Dorsolateral prefrontal cortex (tissue), 120 donors: ENCODE measurements at regions of chr1 and their contacts with region 1.

Region 1: DNA sequence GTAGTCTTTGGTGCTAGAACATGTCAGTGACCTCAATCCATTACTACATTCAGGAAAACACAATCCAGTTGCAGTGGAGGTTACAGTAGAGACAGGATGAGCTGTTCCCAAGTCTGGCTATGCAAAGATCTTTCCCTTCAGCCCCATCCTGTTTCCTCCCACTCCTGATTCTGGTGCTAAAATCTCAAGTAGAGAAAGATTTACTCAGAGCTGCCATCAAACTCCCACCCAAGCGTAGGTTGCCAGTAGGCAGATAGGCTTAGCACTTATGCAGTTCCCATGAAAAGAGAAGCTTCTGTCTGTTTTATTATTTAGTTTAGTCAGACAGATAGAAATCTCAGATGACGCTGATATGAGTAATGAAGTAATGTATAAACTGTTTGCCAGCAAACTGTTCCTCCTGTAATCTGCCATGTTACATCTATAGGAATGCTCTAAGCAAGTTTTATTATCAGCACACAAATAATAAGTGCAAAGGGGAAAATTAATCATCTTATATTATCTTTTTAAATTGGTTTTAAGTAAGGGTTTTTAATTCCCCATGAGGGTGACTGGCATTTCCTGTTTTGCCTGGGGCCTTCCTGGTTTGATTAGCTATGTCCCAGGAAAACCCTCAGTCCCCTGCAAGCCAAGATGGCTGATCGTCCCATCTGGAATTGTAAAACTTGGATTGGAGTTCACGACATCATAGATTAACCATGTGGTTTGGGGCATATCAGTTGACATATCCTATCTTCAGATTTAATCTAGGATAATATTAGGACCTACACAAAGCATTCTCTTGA is 188.3 kb upstream of the PALMD start:
- DNase-seq: peak in 3 of 10 donors; percentile 22 to 54 (median 51)
- H3K4me3 ChIP-seq: no peak overlapping the region
- H3K27ac ChIP-seq: no peak overlapping the region
- H3K27me3 ChIP-seq: no peaks in the 10 kb centered on the region
- CTCF ChIP-seq: no peak

Region 2: DNA sequence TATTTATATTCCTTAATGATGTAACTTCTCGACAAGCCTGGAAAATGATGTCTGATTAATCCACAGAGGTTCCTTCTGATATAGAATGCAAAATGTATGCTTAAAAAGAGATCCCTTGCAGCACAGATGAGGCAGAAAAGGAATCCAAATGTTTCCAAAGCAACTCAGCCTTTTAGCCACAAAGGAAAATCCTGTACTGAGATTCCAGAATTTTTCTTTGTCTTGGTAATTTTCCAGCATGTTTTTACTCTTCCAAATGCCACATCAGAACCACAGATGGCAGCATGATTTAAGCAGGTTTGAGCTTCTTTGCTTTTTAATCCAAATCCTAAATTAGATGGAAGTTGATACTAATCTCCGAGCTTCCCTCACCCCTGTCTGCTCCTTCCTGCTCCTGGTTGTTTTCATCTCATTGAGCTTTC is 12.0 kb after region 1 on chr1:
- intact Hi-C with region 1: loop called in 1 of 2 experiments (anchors 1 kb)
- DNase-seq: no peak
- H3K4me3 ChIP-seq: no peak overlapping the region
- H3K27ac ChIP-seq: peak overlapping the region in 15 of 59 donors; percentile 5 to 76 (median 48)
- H3K27me3 ChIP-seq: no peaks in the 10 kb centered on the region
- CTCF ChIP-seq: no peak

Region 3: DNA sequence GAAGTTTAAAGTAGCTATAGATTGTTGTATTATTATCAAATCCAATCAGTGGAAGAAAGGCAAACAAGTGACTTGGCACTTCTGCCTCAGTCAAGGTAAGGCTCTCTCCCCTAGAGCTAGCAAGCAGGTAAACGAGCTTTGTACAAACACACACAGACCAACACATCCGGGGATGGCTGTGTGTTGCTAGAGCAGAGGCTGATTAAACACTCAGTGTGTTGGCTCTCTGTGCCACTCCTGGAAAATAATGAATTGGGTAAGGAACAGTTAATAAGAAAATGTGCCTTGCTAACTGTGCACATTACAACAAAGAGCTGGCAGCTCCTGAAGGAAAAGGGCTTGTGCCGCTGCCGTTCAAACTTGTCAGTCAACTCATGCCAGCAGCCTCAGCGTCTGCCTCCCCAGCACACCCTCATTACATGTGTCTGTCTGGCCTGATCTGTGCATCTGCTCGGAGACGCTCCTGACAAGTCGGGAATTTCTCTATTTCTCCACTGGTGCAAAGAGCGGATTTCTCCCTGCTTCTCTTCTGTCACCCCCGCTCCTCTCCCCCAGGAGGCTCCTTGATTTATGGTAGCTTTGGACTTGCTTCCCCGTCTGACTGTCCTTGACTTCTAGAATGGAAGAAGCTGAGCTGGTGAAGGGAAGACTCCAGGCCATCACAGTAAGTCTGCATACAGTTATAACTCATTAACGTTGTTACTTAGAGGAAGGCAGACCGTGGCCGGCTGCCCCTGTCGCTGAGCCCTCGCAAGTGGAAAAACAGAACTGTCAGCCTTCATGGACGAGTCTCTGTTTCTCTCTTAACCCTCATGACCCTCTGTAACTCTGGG is 188.3 kb after region 1 on chr1 and contains the start of gene PALMD:
- intact Hi-C with region 1: no loop called
- DNase-seq: peak in 1 of 10 donors; percentile 36
- H3K4me3 ChIP-seq: peak within 1 kb of the TSS in 58 of 59 donors; percentile 0 to 67 (median 44)
- H3K27ac ChIP-seq: peak within 1 kb of the TSS in 43 of 59 donors; percentile 1 to 83 (median 45)
- H3K27me3 ChIP-seq: peaks cover 0 to 27% (median 3%) of the 10 kb centered on the region in 45 donors
- CTCF ChIP-seq: no peak
- total RNA-seq, gene PALMD: 2.2 to 18.4 (median 6.4) TPM